ENCODE measurements at regions of chr10 and their contacts with region 1.

Region 1: DNA sequence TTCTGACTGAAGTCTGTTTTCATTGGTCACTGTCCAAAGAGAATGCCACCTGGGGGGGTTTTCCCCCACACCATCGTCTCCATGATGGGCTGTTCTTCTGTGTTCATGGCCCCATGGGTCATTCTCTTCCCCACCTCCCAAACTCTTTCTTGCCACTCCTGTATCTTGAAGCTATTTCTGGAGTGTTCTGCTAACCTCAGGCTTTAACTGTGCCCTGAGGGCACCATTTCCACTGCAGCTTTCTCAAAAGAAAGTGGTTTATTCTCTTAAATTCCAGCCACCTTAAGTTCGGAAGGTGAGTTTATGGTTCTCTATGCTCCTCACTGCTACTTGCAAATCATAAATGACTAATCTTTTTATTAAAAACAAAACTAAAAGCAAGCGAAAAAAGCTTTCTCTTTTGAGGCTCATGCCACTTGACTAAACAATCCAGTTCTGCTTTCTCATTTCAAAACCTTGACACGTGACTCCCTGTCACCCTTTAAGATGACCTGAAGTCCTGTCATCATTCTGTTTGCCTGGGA is 7.4 kb upstream of the APBB1IP start:
- DNase-seq: no peak
- H3K4me3 Mint-ChIP-seq: peak overlapping the region; percentile 41
- H3K27ac Mint-ChIP-seq: peak overlapping the region; percentile 84
- H3K4me1 Mint-ChIP-seq: peaks cover 27% of the 10 kb centered on the region
- H3K27me3 Mint-ChIP-seq: no peaks in the 10 kb centered on the region

Region 2: GRCh38 chr10:26357203-26357602 is 73.5 kb before region 1 on chr10:
- CTCF ChIA-PET with region 1: no interaction called
- POLR2A ChIA-PET with region 1: interaction called, 3 read pairs
- intact Hi-C with region 1: loop called (anchors 1 kb)
- DNase-seq: peak; percentile 20
- H3K4me3 Mint-ChIP-seq: no peak overlapping the region
- H3K27ac Mint-ChIP-seq: no peak overlapping the region
- H3K4me1 Mint-ChIP-seq: peaks cover 11% of the 10 kb centered on the region
- H3K27me3 Mint-ChIP-seq: peaks cover 17% of the 10 kb centered on the region

Region 3: DNA sequence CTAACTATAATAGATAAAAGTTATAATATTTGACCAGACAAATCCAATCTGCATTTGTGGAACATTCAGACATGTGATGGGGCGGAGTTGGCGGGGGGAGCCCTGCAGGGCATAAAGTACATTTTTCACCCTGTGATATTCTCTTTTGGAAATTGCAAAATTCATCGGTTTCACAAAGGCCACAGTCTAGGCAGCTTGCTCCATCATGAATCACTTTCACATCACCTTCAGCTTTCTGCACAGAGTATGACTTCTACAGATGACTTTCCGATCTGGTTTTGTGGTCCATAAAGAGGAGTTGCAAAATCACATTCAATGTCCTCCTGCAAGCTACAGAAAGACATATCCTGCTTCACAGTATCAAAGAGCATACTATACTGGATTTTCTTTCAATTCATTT is 43.9 kb before region 1 on chr10:
- CTCF ChIA-PET with region 1: no interaction called
- POLR2A ChIA-PET with region 1: interaction called, 3 read pairs
- intact Hi-C with region 1: loop called (anchors 5 kb)
- DNase-seq: no peak
- H3K4me3 Mint-ChIP-seq: no peak overlapping the region
- H3K27ac Mint-ChIP-seq: no peak overlapping the region
- H3K4me1 Mint-ChIP-seq: peaks cover 3% of the 10 kb centered on the region
- H3K27me3 Mint-ChIP-seq: peaks cover 8% of the 10 kb centered on the region

Region 4: DNA sequence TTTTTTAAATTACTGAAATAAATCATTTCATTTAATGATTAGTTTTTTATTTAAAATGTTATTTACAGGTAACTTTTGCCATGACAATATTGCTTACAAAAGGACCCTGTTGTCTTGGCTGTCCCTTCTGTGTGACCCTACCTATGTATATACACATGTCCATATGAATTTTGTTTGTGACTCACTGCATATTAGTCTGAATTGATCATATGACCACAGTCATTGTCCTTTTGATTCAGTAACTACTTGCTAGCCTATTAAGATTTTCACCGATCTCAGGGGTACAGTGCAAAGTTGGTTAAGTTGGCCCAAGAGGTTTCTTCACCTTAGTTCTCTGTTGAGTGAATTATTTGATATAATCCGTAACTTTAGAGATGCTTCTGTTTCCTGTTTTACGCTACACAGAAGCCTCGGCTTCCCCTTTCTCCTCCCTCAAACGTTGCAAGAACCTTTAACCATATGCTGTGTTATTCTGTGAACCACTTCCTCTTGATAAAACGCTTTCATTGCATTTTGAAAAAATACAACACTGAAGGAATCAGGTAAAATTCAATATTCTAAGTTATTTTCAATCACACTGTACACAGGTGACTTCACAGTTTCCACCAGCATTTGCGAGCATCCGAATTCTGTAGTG is 51.3 kb after region 1 on chr10:
- CTCF ChIA-PET with region 1: no interaction called
- POLR2A ChIA-PET with region 1: no interaction called
- intact Hi-C with region 1: loop called (anchors 1 kb)
- DNase-seq: no peak
- H3K4me3 Mint-ChIP-seq: peak overlapping the region; percentile 73
- H3K27ac Mint-ChIP-seq: peak overlapping the region; percentile 98
- H3K4me1 Mint-ChIP-seq: peaks cover 76% of the 10 kb centered on the region
- H3K27me3 Mint-ChIP-seq: no peaks in the 10 kb centered on the region

Region 5: GRCh38 chr10:27542812-27543211 is 1112.1 kb after region 1 on chr10:
- CTCF ChIA-PET with region 1: no interaction called
- POLR2A ChIA-PET with region 1: no interaction called
- intact Hi-C with region 1: no loop called
- DNase-seq: no peak
- H3K4me3 Mint-ChIP-seq: no peak overlapping the region
- H3K27ac Mint-ChIP-seq: no peak overlapping the region
- H3K4me1 Mint-ChIP-seq: peaks cover 13% of the 10 kb centered on the region
- H3K27me3 Mint-ChIP-seq: no peaks in the 10 kb centered on the region